Naive thymus-derived CD4-positive, alpha-beta T cell (primary cell): ENCODE measurements at regions of chr18 and their contacts with region 1.

Region 1: GRCh38 chr18:62522504-62523254 is at the start of gene ZCCHC2:
- DNase-seq: peak; percentile 96 to 100 (median 99)
- ATAC-seq: peak; percentile 88
- H3K4me3 ChIP-seq: peak within 1 kb of the TSS; percentile 81
- H3K4me3 Mint-ChIP-seq: peak within 1 kb of the TSS; percentile 91 to 98 (median 96)
- H3K27ac ChIP-seq: peak within 1 kb of the TSS; percentile 88
- H3K27ac Mint-ChIP-seq: peak within 1 kb of the TSS; percentile 62 to 97 (median 93)
- H3K4me1 ChIP-seq: peaks cover 23 to 26% of the 10 kb centered on the region in 2 donors
- H3K4me1 Mint-ChIP-seq: peaks cover 21 to 44% (median 37%) of the 10 kb centered on the region in 7 donors
- H3K27me3 ChIP-seq: no peaks in the 10 kb centered on the region
- H3K27me3 Mint-ChIP-seq: no peaks in the 10 kb centered on the region
- total RNA-seq, gene ZCCHC2: 51.1 to 68.5 (median 63.1) TPM

Region 2: GRCh38 chr18:61972389-61973264 is 550.1 kb before region 1 on chr18:
- CTCF ChIA-PET with region 1: no interaction called
- POLR2A ChIA-PET with region 1: no interaction called
- intact Hi-C with region 1: loop called in 1 of 2 experiments (anchors 10 kb)
- DNase-seq: no peak
- ATAC-seq: peak; percentile 60
- H3K4me3 ChIP-seq: no peak overlapping the region
- H3K4me3 Mint-ChIP-seq: no peak overlapping the region
- H3K27ac ChIP-seq: no peak overlapping the region
- H3K27ac Mint-ChIP-seq: peak overlapping the region in 8 of 9 donors; percentile 0 to 75 (median 62)
- H3K4me1 ChIP-seq: peaks cover 3 to 6% of the 10 kb centered on the region in 2 donors
- H3K4me1 Mint-ChIP-seq: peaks cover 3 to 32% (median 17%) of the 10 kb centered on the region in 7 donors
- H3K27me3 ChIP-seq: no peaks in the 10 kb centered on the region
- H3K27me3 Mint-ChIP-seq: peaks cover 0 to 3% (median 0%) of the 10 kb centered on the region in 5 donors

Region 3: GRCh38 chr18:62505669-62506494 is 16.8 kb before region 1 on chr18:
- CTCF ChIA-PET with region 1: interaction called, 6 read pairs
- POLR2A ChIA-PET with region 1: interaction called, 31 read pairs
- intact Hi-C with region 1: loop called (anchors 1 kb)
- DNase-seq: peak in 5 of 9 donors; percentile 37 to 49 (median 47)
- ATAC-seq: peak; percentile 58
- H3K4me3 ChIP-seq: peak overlapping the region; percentile 77
- H3K4me3 Mint-ChIP-seq: peak overlapping the region; percentile 82 to 94 (median 88)
- H3K27ac ChIP-seq: peak overlapping the region; percentile 67
- H3K27ac Mint-ChIP-seq: peak overlapping the region; percentile 90 to 100 (median 96)
- H3K4me1 ChIP-seq: peaks cover 5 to 17% of the 10 kb centered on the region in 2 donors
- H3K4me1 Mint-ChIP-seq: peaks cover 4 to 30% (median 21%) of the 10 kb centered on the region in 7 donors
- H3K27me3 ChIP-seq: no peaks in the 10 kb centered on the region
- H3K27me3 Mint-ChIP-seq: no peaks in the 10 kb centered on the region

Region 4: DNA sequence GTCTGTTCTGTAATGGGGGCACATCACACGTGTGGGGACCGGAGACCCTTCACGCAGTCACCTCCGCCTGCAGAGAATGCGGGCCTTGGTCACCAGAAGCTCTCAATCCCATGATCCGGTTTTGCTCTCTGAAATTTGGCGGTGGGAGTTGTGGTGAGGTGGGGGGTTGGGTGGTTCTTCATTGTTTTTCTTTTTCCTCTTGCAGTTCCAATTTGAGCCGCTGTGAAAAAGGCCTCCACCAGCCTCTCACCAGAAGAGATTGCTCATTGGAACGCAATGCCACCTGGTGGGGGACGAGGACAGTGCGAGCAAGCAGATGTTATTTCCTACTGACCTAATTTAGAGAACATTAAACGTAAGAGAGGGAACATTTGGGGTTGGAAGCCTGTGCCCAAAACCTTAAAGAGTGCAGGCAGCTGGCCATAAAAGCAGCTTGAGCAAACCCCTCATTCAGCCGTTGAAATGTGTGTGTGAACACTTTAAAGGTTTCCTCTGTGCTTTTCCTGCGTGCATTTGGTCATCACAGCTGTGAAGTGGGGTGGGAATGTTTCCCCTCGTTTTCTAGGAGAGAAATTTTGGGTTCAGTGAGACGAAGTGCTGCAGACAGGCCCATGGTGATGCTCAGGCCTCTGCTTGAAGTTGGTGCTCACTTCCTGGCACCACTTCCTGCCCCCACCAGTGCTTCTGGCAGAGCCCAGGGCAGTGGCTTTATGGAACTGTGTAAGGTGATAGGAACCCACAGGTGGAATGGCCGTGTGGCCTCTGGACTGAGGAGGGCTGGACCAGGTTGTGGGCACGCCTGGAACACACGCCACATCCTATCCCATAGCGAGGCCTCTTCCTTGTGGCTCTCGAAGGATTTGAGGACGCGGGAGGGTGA is 61.8 kb after region 1 on chr18:
- CTCF ChIA-PET with region 1: interaction called, 3 read pairs
- POLR2A ChIA-PET with region 1: interaction called, 11 read pairs
- intact Hi-C with region 1: loop called (anchors 1 kb)
- DNase-seq: peak; percentile 61 to 85 (median 82)
- ATAC-seq: peak; percentile 99
- H3K4me3 ChIP-seq: no peak overlapping the region
- H3K4me3 Mint-ChIP-seq: peak overlapping the region; percentile 18 to 65 (median 58)
- H3K27ac ChIP-seq: no peak overlapping the region
- H3K27ac Mint-ChIP-seq: peak overlapping the region; percentile 26 to 83 (median 72)
- H3K4me1 ChIP-seq: peaks cover 18 to 22% of the 10 kb centered on the region in 2 donors
- H3K4me1 Mint-ChIP-seq: peaks cover 17 to 50% (median 32%) of the 10 kb centered on the region in 7 donors
- H3K27me3 ChIP-seq: no peaks in the 10 kb centered on the region
- H3K27me3 Mint-ChIP-seq: no peaks in the 10 kb centered on the region

Region 5: GRCh38 chr18:63367053-63367953 is 844.6 kb after region 1 on chr18 and contains the start of gene KDSR:
- CTCF ChIA-PET with region 1: no interaction called
- POLR2A ChIA-PET with region 1: interaction called, 6 read pairs
- intact Hi-C with region 1: loop called (anchors 2 kb)
- DNase-seq: peak; percentile 71 to 90 (median 79)
- ATAC-seq: peak; percentile 92
- H3K4me3 ChIP-seq: peak within 1 kb of the TSS; percentile 92
- H3K4me3 Mint-ChIP-seq: peak within 1 kb of the TSS; percentile 85 to 99 (median 94)
- H3K27ac ChIP-seq: peak within 1 kb of the TSS; percentile 77
- H3K27ac Mint-ChIP-seq: peak within 1 kb of the TSS; percentile 84 to 92 (median 89)
- H3K4me1 ChIP-seq: peaks cover 6 to 29% of the 10 kb centered on the region in 2 donors
- H3K4me1 Mint-ChIP-seq: peaks cover 32 to 56% (median 41%) of the 10 kb centered on the region in 7 donors
- H3K27me3 ChIP-seq: no peaks in the 10 kb centered on the region
- H3K27me3 Mint-ChIP-seq: no peaks in the 10 kb centered on the region
- total RNA-seq, gene KDSR: 24.4 to 57.9 (median 46.9) TPM